ENCODE measurements at regions of chrX and their contacts with region 1.

Region 1: GRCh38 chrX:56978172-56978571 is 17.2 kb downstream of the SPIN3 start:
- DNase-seq: peak; percentile 60
- ATAC-seq: peak; percentile 61
- H3K4me3 ChIP-seq: no peak overlapping the region
- H3K4me3 Mint-ChIP-seq: no peak overlapping the region
- H3K27ac ChIP-seq: no peak overlapping the region
- H3K27ac Mint-ChIP-seq: no peak overlapping the region
- H3K4me1 ChIP-seq: no peaks in the 10 kb centered on the region
- H3K4me1 Mint-ChIP-seq: no peaks in the 10 kb centered on the region
- H3K27me3 ChIP-seq: no peaks in the 10 kb centered on the region
- H3K27me3 Mint-ChIP-seq: no peaks in the 10 kb centered on the region
- CTCF ChIP-seq: peak; percentile 69

Region 2: DNA sequence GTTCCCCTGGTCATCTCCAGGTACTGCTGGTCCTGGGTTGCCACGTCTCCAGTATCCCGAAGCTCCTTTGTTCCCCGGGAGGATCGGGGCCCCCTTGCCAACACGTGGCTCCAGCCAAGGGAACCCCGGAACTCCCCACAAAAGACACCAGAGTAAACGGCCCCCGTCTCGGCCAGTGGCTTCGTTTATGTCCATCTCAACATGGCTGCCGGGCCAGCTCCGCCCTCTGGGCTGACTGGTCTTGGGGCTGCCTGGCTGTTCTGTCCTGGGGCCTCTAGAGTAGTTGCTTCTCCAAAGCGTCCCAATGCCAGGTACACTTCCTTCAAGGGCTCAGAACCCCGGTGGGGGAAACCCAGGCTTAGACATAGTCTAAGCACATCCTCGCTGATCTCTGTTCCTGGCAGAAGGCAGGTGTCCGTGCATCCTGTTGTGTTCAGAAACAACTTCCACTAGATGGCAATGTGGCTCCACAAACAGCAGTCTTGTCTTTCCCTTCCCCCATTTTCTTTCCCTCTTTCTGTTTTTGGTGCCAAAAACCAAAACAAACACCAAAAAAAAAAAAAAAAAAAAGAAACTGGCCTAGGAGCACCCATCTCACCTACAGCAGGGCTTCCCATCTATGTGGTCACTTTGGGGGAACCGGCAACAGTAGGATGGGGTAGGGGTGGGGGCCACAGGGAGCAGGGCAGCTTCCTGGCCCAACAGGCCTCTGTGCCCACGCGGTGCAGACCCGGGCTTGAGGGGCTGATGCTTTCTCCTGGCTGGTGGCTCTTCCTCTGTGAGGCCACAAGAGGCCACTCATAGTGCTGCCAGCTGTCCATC is 213.8 kb before region 1 on chrX:
- CTCF ChIA-PET with region 1: interaction called, 28 read pairs
- POLR2A ChIA-PET with region 1: no interaction called
- intact Hi-C with region 1: no loop called
- DNase-seq: peak; percentile 85
- ATAC-seq: peak; percentile 72
- H3K4me3 ChIP-seq: peak overlapping the region in 4 of 5 experiments; percentile 11 to 83 (median 71)
- H3K4me3 Mint-ChIP-seq: peak overlapping the region; percentile 62
- H3K27ac ChIP-seq: peak overlapping the region; percentile 86 to 99
- H3K27ac Mint-ChIP-seq: peak overlapping the region; percentile 86
- H3K4me1 ChIP-seq: peaks cover 50% of the 10 kb centered on the region in 2 donors
- H3K4me1 Mint-ChIP-seq: peaks cover 47% of the 10 kb centered on the region
- H3K27me3 ChIP-seq: no peaks in the 10 kb centered on the region
- H3K27me3 Mint-ChIP-seq: no peaks in the 10 kb centered on the region
- CTCF ChIP-seq: peak; percentile 59

Region 3: GRCh38 chrX:56802921-56803849 is 175.0 kb before region 1 on chrX:
- CTCF ChIA-PET with region 1: interaction called, 9 read pairs
- POLR2A ChIA-PET with region 1: no interaction called
- intact Hi-C with region 1: loop called (anchors 1 kb)
- DNase-seq: peak; percentile 48
- ATAC-seq: no peak
- H3K4me3 ChIP-seq: peak overlapping the region in 3 of 5 experiments; percentile 68 to 73 (median 68)
- H3K4me3 Mint-ChIP-seq: no peak overlapping the region
- H3K27ac ChIP-seq: peak overlapping the region in 1 of 2 donors; percentile 58
- H3K27ac Mint-ChIP-seq: peak overlapping the region; percentile 56
- H3K4me1 ChIP-seq: peaks cover 27 to 30% of the 10 kb centered on the region in 2 donors
- H3K4me1 Mint-ChIP-seq: peaks cover 42% of the 10 kb centered on the region
- H3K27me3 ChIP-seq: no peaks in the 10 kb centered on the region
- H3K27me3 Mint-ChIP-seq: no peaks in the 10 kb centered on the region
- CTCF ChIP-seq: peak; percentile 31

Measured in B cell (primary cell).